Activated B cell treated with CpG ODN at 0.5 μM for 24 hours (primary cell): ENCODE measurements at regions of chr20 and their contacts with region 1.

Region 1: GRCh38 chr20:58963064-58963584 is 17.9 kb upstream of the NELFCD start:
- DNase-seq: no peak
- ATAC-seq: no peak
- H3K4me3 Mint-ChIP-seq: no peak overlapping the region
- H3K27ac Mint-ChIP-seq: no peak overlapping the region
- H3K4me1 Mint-ChIP-seq: no peaks in the 10 kb centered on the region
- H3K27me3 Mint-ChIP-seq: no peaks in the 10 kb centered on the region
- CTCF ChIP-seq: no peak

Region 2: GRCh38 chr20:58950603-58951002 is 12.5 kb before region 1 on chr20:
- CTCF ChIA-PET with region 1: no interaction called
- POLR2A ChIA-PET with region 1: interaction called, 4 read pairs
- intact Hi-C with region 1: loop called (anchors 2 kb)
- DNase-seq: no peak
- ATAC-seq: no peak
- H3K4me3 Mint-ChIP-seq: no peak overlapping the region
- H3K27ac Mint-ChIP-seq: no peak overlapping the region
- H3K4me1 Mint-ChIP-seq: peaks cover 10% of the 10 kb centered on the region
- H3K27me3 Mint-ChIP-seq: peaks cover 2% of the 10 kb centered on the region
- CTCF ChIP-seq: no peak